ENCODE measurements at regions of chr13 and their contacts with region 1.

Region 1: GRCh38 chr13:39565036-39565949 is 37.7 kb downstream of the LHFPL6 start:
- DNase-seq: peak; percentile 63 to 72
- H3K4me3 ChIP-seq: no peak overlapping the region
- H3K4me3 Mint-ChIP-seq: peak overlapping the region; percentile 68
- H3K27ac Mint-ChIP-seq: peak overlapping the region; percentile 97
- H3K4me1 ChIP-seq: peaks cover 29% of the 10 kb centered on the region
- H3K4me1 Mint-ChIP-seq: peaks cover 39% of the 10 kb centered on the region
- H3K27me3 ChIP-seq: no peaks in the 10 kb centered on the region
- H3K27me3 Mint-ChIP-seq: no peaks in the 10 kb centered on the region
- CTCF ChIP-seq: no peak

Region 2: DNA sequence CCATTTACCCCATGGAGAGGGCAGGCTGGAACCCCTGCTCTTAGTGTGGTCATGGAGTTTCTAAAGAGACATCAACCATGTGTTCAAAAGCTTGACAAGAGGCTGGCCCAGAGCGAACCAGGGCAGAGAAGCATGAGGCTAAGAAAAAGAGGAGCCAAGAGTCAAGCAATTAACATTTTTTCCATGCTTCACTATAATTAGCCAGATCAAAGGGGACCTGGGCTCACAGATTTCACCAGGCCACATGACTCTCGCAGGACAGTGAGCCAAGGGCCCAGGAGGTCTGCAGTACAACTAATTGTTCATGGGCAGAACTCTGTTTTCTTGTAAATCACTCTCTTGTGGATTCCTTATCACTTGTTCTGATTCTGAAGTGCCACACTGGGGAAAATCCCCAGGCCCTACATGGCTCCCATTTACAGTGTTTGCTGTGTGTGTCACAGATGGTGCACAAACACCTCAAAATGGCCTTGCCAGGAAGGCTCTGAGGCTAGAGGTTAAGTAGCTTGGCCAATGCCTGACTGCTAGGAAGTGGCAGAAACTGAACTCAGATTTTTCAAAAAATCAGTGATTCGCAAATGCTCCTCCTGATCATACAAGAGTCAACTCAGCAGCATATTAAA is 63.5 kb before region 1 on chr13:
- CTCF ChIA-PET with region 1: no interaction called
- POLR2A ChIA-PET with region 1: no interaction called
- intact Hi-C with region 1: no loop called
- DNase-seq: peak; percentile 18 to 46
- H3K4me3 ChIP-seq: no peak overlapping the region
- H3K4me3 Mint-ChIP-seq: no peak overlapping the region
- H3K27ac Mint-ChIP-seq: no peak overlapping the region
- H3K4me1 ChIP-seq: peaks cover 12% of the 10 kb centered on the region; the same call in 1 of the 2 replicates
- H3K4me1 Mint-ChIP-seq: peaks cover 9% of the 10 kb centered on the region
- H3K27me3 ChIP-seq: no peaks in the 10 kb centered on the region
- H3K27me3 Mint-ChIP-seq: peaks cover 10% of the 10 kb centered on the region
- CTCF ChIP-seq: no peak

Region 3: DNA sequence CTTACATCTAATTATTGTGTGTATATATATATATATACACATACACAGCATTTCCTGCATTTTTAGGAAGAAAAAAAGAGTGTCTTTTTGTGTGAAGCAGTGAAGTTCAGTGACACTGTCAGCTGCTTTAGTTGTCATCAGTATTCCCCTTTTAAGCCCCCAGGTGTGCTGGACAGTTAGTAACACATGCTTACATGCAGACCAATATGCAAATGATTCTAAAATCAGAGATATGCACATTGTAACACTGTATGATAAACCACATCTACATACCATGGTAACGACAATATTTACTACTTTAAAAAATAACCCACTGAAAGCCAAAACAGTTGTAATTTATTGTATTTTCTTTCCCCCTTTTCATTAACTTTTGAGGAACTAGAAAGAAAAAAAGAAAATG is 20.9 kb after region 1 on chr13:
- CTCF ChIA-PET with region 1: no interaction called
- POLR2A ChIA-PET with region 1: no interaction called
- intact Hi-C with region 1: no loop called
- DNase-seq: no peak
- H3K4me3 ChIP-seq: no peak overlapping the region
- H3K4me3 Mint-ChIP-seq: no peak overlapping the region
- H3K27ac Mint-ChIP-seq: no peak overlapping the region
- H3K4me1 ChIP-seq: no peaks in the 10 kb centered on the region
- H3K4me1 Mint-ChIP-seq: no peaks in the 10 kb centered on the region
- H3K27me3 ChIP-seq: no peaks in the 10 kb centered on the region
- H3K27me3 Mint-ChIP-seq: no peaks in the 10 kb centered on the region
- CTCF ChIP-seq: no peak

Region 4: DNA sequence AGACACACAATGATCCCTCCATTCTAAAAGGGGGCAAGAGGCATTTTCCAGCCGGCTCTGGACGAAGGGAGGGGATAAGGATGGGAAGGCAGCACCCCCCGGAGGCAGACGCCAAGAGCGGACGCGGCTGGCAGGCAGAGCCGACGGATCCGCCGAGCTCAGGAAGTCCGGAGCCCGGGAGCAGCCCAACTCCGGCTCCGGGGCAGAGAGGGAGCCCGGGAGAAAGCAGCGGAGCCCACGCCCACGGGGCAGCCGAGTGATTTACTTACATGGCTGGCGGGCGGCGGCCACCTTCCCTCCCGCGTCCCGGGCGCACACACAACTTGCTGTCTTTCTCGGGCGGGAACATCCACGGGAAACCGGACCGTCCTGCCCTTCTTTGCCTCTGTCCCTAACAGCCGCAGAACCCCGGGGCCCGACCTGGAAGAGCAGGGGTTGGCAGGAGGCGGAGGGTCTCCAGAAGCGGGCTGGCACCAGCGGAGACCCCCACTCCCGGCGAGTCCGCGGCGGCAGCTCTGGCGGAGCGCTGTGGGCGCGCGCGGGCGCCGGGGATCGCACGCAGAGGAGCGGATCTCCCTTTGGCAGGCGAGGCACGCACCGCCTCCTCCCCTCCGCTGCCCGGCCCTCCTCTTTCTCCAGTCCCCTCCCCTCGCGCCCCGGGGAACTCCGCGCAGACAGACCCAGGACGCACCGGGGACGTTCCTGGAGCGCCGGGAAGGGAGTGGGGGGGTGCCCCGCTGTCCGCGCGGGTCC is 37.5 kb after region 1 on chr13 and contains the start of gene LHFPL6:
- CTCF ChIA-PET with region 1: no interaction called
- POLR2A ChIA-PET with region 1: no interaction called
- intact Hi-C with region 1: loop called (anchors 2 kb)
- DNase-seq: peak; percentile 72 to 74
- H3K4me3 ChIP-seq: peak within 1 kb of the TSS; percentile 53
- H3K4me3 Mint-ChIP-seq: peak within 1 kb of the TSS; percentile 83
- H3K27ac Mint-ChIP-seq: no peak within 1 kb of the TSS
- H3K4me1 ChIP-seq: 0 out of 2 replicates have a peak, but pooled peaks cover 4% of the 10 kb centered on the region
- H3K4me1 Mint-ChIP-seq: peaks cover 5% of the 10 kb centered on the region
- H3K27me3 ChIP-seq: 0 out of 2 replicates have a peak, but pooled peaks cover 2% of the 10 kb centered on the region
- H3K27me3 Mint-ChIP-seq: peaks cover 23% of the 10 kb centered on the region
- CTCF ChIP-seq: peak in 1 of 2 experiments; percentile 46
- total RNA-seq, gene LHFPL6: 3.6 and 3.9 TPM in 2 replicates

Measured in Caco-2 (cell line).